GM12878 (cell line): ENCODE measurements at regions of chr17 and their contacts with region 1.

Region 1: GRCh38 chr17:47978324-47978723 is 7.4 kb downstream of the CDK5RAP3 start:
- DNase-seq: no peak
- ATAC-seq: peak; percentile 98
- H3K4me3 ChIP-seq: no peak overlapping the region
- H3K27ac ChIP-seq: no peak overlapping the region
- H3K4me1 ChIP-seq: no peaks in the 10 kb centered on the region; the same call in 1 of the 2 replicates
- H3K27me3 ChIP-seq: no peaks in the 10 kb centered on the region
- CTCF ChIP-seq: peak; percentile 73 to 86 (median 77)
- EP300 ChIP-seq: no peak
- POLR2A ChIP-seq: no peak
- RAD21 ChIP-seq: peak; percentile 86

Region 2: DNA sequence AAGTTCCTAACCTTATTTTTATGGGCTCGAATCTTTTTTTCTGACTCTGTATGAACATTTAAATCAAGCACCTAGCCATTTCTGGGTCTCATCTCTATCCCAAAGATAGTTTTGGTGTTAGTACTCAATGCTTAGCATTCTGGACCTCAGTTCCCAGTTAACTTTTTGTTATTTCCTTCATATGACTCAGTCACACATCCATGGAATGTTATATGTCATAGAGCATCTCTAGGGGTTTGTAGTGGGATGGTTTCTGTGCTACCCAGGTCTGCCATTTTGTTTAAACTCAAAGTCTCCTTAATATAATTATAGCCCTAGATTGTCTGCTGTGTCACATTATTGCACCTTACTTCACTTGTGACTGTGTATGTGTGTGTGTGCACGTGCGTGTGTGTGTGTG is 564.5 kb before region 1 on chr17:
- CTCF ChIA-PET with region 1: no interaction called
- POLR2A ChIA-PET with region 1: no interaction called
- RAD21 ChIA-PET with region 1: no interaction called
- SMC1A ChIA-PET with region 1: no interaction called
- in situ Hi-C with region 1: no loop called
- intact Hi-C with region 1: no loop called
- DNase-seq: no peak
- ATAC-seq: no peak
- H3K4me3 ChIP-seq: no peak overlapping the region
- H3K27ac ChIP-seq: no peak overlapping the region
- H3K4me1 ChIP-seq: no peaks in the 10 kb centered on the region
- H3K27me3 ChIP-seq: no peaks in the 10 kb centered on the region
- CTCF ChIP-seq: no peak
- EP300 ChIP-seq: no peak
- POLR2A ChIP-seq: no peak
- RAD21 ChIP-seq: no peak

Region 3: GRCh38 chr17:47915776-47916398 is 62.4 kb before region 1 on chr17:
- CTCF ChIA-PET with region 1: no interaction called
- POLR2A ChIA-PET with region 1: no interaction called
- RAD21 ChIA-PET with region 1: no interaction called
- SMC1A ChIA-PET with region 1: no interaction called
- in situ Hi-C with region 1: no loop called
- intact Hi-C with region 1: no loop called
- DNase-seq: no peak
- ATAC-seq: no peak
- H3K4me3 ChIP-seq: no peak overlapping the region
- H3K27ac ChIP-seq: no peak overlapping the region
- H3K4me1 ChIP-seq: no peaks in the 10 kb centered on the region
- H3K27me3 ChIP-seq: no peaks in the 10 kb centered on the region
- CTCF ChIP-seq: no peak
- EP300 ChIP-seq: no peak
- POLR2A ChIP-seq: no peak; the same call in 1 of the 2 replicates
- RAD21 ChIP-seq: no peak

Region 4: GRCh38 chr17:47941236-47941994 is 36.9 kb before region 1 on chr17 and contains the start of gene PNPO:
- CTCF ChIA-PET with region 1: interaction called, 463 read pairs
- POLR2A ChIA-PET with region 1: interaction called, 55 read pairs
- RAD21 ChIA-PET with region 1: interaction called, 4 read pairs
- SMC1A ChIA-PET with region 1: interaction called, 139 read pairs
- in situ Hi-C with region 1: no loop called
- intact Hi-C with region 1: no loop called
- DNase-seq: peak; percentile 97
- ATAC-seq: peak; percentile 95
- H3K4me3 ChIP-seq: peak within 1 kb of the TSS; percentile 91
- H3K27ac ChIP-seq: peak within 1 kb of the TSS; percentile 86
- H3K4me1 ChIP-seq: peaks cover 48% of the 10 kb centered on the region
- H3K27me3 ChIP-seq: no peaks in the 10 kb centered on the region
- CTCF ChIP-seq: no peak
- EP300 ChIP-seq: 0 out of 4 replicates have a peak, but pooled peaks of 1 of the 2 experiments have one; percentile 12
- POLR2A ChIP-seq: peak; percentile 79
- RAD21 ChIP-seq: no peak
- polyA plus RNA-seq, gene PNPO: 13.9 to 32.3 TPM

Region 5: GRCh38 chr17:47957591-47958428 is 20.5 kb before region 1 on chr17 and contains the start of gene PRR15L:
- CTCF ChIA-PET with region 1: interaction called, 51 read pairs
- POLR2A ChIA-PET with region 1: interaction called, 10 read pairs
- RAD21 ChIA-PET with region 1: no interaction called
- SMC1A ChIA-PET with region 1: interaction called, 139 read pairs
- in situ Hi-C with region 1: no loop called
- intact Hi-C with region 1: no loop called
- DNase-seq: no peak
- ATAC-seq: no peak
- H3K4me3 ChIP-seq: no peak within 1 kb of the TSS
- H3K27ac ChIP-seq: no peak within 1 kb of the TSS
- H3K4me1 ChIP-seq: no peaks in the 10 kb centered on the region
- H3K27me3 ChIP-seq: no peaks in the 10 kb centered on the region
- CTCF ChIP-seq: no peak
- EP300 ChIP-seq: no peak
- POLR2A ChIP-seq: no peak
- RAD21 ChIP-seq: no peak
- polyA plus RNA-seq, gene PRR15L: not detected

Region 6: GRCh38 chr17:48002266-48002915 is 24.1 kb after region 1 on chr17:
- CTCF ChIA-PET with region 1: interaction called, 32 read pairs
- POLR2A ChIA-PET with region 1: interaction called, 3 read pairs
- RAD21 ChIA-PET with region 1: interaction called, 11 read pairs
- SMC1A ChIA-PET with region 1: interaction called, 10 read pairs
- in situ Hi-C with region 1: no loop called
- intact Hi-C with region 1: no loop called
- DNase-seq: peak; percentile 75
- ATAC-seq: peak; percentile 85
- H3K4me3 ChIP-seq: no peak overlapping the region
- H3K27ac ChIP-seq: peak overlapping the region; percentile 85
- H3K4me1 ChIP-seq: peaks cover 49% of the 10 kb centered on the region
- H3K27me3 ChIP-seq: no peaks in the 10 kb centered on the region
- CTCF ChIP-seq: no peak
- EP300 ChIP-seq: peak; percentile 47 to 77; a peak in 2 of 4 replicates
- POLR2A ChIP-seq: no peak
- RAD21 ChIP-seq: no peak